ENCODE measurements at regions of chr11 and their contacts with region 1.

Region 1: GRCh38 chr11:113305440-113306336 is 8.7 kb upstream of the TTC12 start:
- DNase-seq: peak; percentile 44 to 89 (median 74)
- ATAC-seq: peak; percentile 100
- H3K4me3 ChIP-seq: no peak overlapping the region
- H3K27ac ChIP-seq: no peak overlapping the region
- H3K4me1 ChIP-seq: no peaks in the 10 kb centered on the region
- H3K27me3 ChIP-seq: no peaks in the 10 kb centered on the region
- CTCF ChIP-seq: peak; percentile 83 to 86

Region 2: GRCh38 chr11:113532697-113533424 is 227.2 kb after region 1 on chr11:
- intact Hi-C with region 1: loop called in 1 of 2 experiments (anchors 5 kb)
- DNase-seq: peak in 3 of 4 donors; percentile 63 to 78 (median 63)
- ATAC-seq: peak; percentile 95
- H3K4me3 ChIP-seq: no peak overlapping the region
- H3K27ac ChIP-seq: no peak overlapping the region
- H3K4me1 ChIP-seq: no peaks in the 10 kb centered on the region
- H3K27me3 ChIP-seq: peaks cover 0 to 19% of the 10 kb centered on the region in 2 donors
- CTCF ChIP-seq: peak; percentile 83 to 89

Region 3: DNA sequence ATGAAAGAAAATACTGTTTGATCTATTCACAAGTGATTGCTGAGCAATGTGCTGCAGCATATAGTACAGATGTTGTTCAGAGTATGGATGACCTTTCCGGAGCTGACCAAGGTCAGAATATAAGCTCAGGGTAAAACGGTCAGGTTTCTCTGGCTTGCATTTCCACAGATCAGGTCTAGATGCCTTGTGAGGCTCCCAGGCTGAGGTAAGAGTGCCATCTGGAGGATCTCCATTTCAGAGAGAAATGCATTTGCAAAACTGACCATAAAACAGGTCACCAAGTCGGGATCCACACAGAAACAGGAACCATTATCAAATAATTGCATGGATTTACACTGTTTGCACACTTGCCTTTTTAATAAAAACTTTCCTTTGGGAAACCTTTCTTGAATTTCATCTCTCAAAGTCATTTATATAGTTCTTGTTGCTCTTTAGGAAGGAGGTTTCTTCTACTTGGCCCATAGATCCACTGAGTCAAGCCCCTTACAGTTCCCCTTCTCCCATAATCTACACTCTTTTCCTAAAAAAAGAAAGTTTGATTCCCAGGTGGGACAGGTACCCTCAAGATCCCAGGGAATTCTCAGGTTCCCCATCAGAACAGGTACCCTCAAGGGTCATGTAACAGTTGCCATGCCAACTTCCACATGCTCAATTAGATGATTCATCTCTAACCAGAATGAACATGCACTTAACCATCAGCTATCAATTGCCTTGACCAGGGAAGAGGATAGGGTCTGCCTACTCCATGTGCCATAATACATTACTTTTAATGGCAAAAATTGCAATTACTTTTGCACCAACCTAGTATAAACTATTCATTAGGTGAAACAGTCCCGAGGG is 425.4 kb after region 1 on chr11:
- intact Hi-C with region 1: loop called in 1 of 2 experiments (anchors 10 kb)
- DNase-seq: peak in 3 of 4 donors; percentile 9 to 33 (median 31)
- ATAC-seq: peak; percentile 71
- H3K4me3 ChIP-seq: no peak overlapping the region
- H3K27ac ChIP-seq: no peak overlapping the region
- H3K4me1 ChIP-seq: no peaks in the 10 kb centered on the region
- H3K27me3 ChIP-seq: no peaks in the 10 kb centered on the region
- CTCF ChIP-seq: peak in 1 of 2 donors; percentile 17

Region 4: GRCh38 chr11:113796663-113797259 is 491.1 kb after region 1 on chr11:
- intact Hi-C with region 1: loop called in 1 of 2 experiments (anchors 5 kb)
- DNase-seq: peak in 2 of 4 donors; percentile 20 to 43
- ATAC-seq: peak; percentile 88
- H3K4me3 ChIP-seq: no peak overlapping the region
- H3K27ac ChIP-seq: no peak overlapping the region
- H3K4me1 ChIP-seq: no peaks in the 10 kb centered on the region
- H3K27me3 ChIP-seq: no peaks in the 10 kb centered on the region
- CTCF ChIP-seq: peak; percentile 54 to 59

Measured in left lung (tissue), 14 donors.